ENCODE measurements at regions of chr22 and their contacts with region 1.

Region 1: GRCh38 chr22:29267858-29268417 is at the starts of genes EWSR1 and RHBDD3:
- DNase-seq: peak; percentile 97 to 99
- ATAC-seq: peak; percentile 87 to 95 (median 89)
- H3K4me3 ChIP-seq: peak within 1 kb of the TSS; percentile 83
- H3K4me3 Mint-ChIP-seq: peak within 1 kb of the TSS; percentile 98
- H3K27ac ChIP-seq: peak within 1 kb of the TSS; percentile 96
- H3K27ac Mint-ChIP-seq: peak within 1 kb of the TSS; percentile 96 to 99
- H3K4me1 ChIP-seq: peaks cover 31% of the 10 kb centered on the region
- H3K4me1 Mint-ChIP-seq: peaks cover 57 to 62% of the 10 kb centered on the region in 2 donors
- H3K27me3 ChIP-seq: no peaks in the 10 kb centered on the region
- H3K27me3 Mint-ChIP-seq: no peaks in the 10 kb centered on the region
- CTCF ChIP-seq: no peak
- total RNA-seq, gene EWSR1: 366 to 387 (median 382) TPM
- total RNA-seq, gene RHBDD3: 16.6 to 20.9 (median 17.9) TPM

Region 2: GRCh38 chr22:27919222-27919941 is 1348.6 kb before region 1 on chr22 and contains the start of gene PITPNB:
- intact Hi-C with region 1: loop called (anchors 10 kb)
- DNase-seq: peak; percentile 99 to 100
- ATAC-seq: peak; percentile 90 to 97 (median 90)
- H3K4me3 ChIP-seq: peak within 1 kb of the TSS; percentile 83
- H3K4me3 Mint-ChIP-seq: peak within 1 kb of the TSS; percentile 96
- H3K27ac ChIP-seq: peak within 1 kb of the TSS; percentile 94
- H3K27ac Mint-ChIP-seq: peak within 1 kb of the TSS; percentile 96 to 99
- H3K4me1 ChIP-seq: peaks cover 19% of the 10 kb centered on the region
- H3K4me1 Mint-ChIP-seq: peaks cover 42 to 58% of the 10 kb centered on the region in 2 donors
- H3K27me3 ChIP-seq: no peaks in the 10 kb centered on the region
- H3K27me3 Mint-ChIP-seq: no peaks in the 10 kb centered on the region
- CTCF ChIP-seq: no peak
- total RNA-seq, gene PITPNB: 58.4 to 77.7 (median 65.1) TPM

Region 3: GRCh38 chr22:29195118-29195963 is 72.6 kb before region 1 on chr22:
- intact Hi-C with region 1: no loop called
- DNase-seq: no peak
- ATAC-seq: peak in 2 of 3 donors; percentile 19 to 70
- H3K4me3 ChIP-seq: no peak overlapping the region
- H3K4me3 Mint-ChIP-seq: no peak overlapping the region
- H3K27ac ChIP-seq: no peak overlapping the region
- H3K27ac Mint-ChIP-seq: no peak overlapping the region
- H3K4me1 ChIP-seq: no peaks in the 10 kb centered on the region
- H3K4me1 Mint-ChIP-seq: peaks cover 0 to 5% of the 10 kb centered on the region in 2 donors
- H3K27me3 ChIP-seq: no peaks in the 10 kb centered on the region
- H3K27me3 Mint-ChIP-seq: no peaks in the 10 kb centered on the region
- CTCF ChIP-seq: no peak

Measured in natural killer cell (primary cell).